Common myeloid progenitor, CD34-positive (primary cell): ENCODE measurements at regions of chr1 and their contacts with region 1.

Region 1: DNA sequence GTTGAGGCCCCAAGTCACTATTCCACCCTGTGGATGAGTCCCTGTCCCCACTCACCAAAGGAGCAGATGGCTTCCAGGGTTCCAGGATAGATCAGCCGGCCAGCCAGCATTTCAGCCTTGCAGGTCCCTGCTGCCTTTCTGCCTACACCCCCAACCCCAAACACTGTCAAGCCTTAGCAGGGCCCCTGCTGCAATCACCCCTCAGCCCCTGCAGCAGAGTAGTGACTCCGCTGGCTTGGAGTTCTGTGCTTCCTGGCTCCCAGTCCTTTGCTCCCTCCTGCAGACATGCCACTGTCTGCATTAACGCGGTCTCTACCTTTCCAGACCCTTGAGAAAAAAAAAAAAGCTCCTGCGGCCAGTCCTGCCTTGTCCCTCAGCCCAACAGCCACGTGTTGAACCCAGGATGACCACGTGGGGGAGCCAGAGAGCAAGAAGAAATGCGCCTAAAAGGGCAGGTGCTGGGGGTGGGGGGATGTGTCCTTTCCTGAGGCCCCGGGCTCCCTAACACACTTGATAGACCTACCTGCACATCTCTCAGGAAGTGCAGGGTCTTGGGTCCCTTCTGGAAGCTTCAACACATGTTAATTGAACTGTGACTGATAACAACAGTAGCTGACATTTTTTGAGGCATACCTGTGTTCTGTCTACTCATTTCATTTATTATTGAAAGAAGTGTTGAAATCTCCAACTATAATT is 37.4 kb downstream of the RASSF5 start:
- DNase-seq: peak; percentile 56 to 68 (median 61)
- H3K4me3 ChIP-seq: no peak overlapping the region
- H3K27ac ChIP-seq: no peak overlapping the region
- H3K4me1 ChIP-seq: peaks cover 0 to 5% (median 2%) of the 10 kb centered on the region in 4 experiments
- H3K27me3 ChIP-seq: no peaks in the 10 kb centered on the region

Region 2: GRCh38 chr1:206489980-206490770 is 54.5 kb before region 1 on chr1:
- CTCF ChIA-PET with region 1: interaction called, 10 read pairs
- POLR2A ChIA-PET with region 1: no interaction called
- DNase-seq: peak; percentile 60 to 78 (median 70)
- H3K4me3 ChIP-seq: no peak overlapping the region
- H3K27ac ChIP-seq: no peak overlapping the region
- H3K4me1 ChIP-seq: peaks cover 0 to 6% (median 3%) of the 10 kb centered on the region in 4 experiments
- H3K27me3 ChIP-seq: no peaks in the 10 kb centered on the region

Region 3: DNA sequence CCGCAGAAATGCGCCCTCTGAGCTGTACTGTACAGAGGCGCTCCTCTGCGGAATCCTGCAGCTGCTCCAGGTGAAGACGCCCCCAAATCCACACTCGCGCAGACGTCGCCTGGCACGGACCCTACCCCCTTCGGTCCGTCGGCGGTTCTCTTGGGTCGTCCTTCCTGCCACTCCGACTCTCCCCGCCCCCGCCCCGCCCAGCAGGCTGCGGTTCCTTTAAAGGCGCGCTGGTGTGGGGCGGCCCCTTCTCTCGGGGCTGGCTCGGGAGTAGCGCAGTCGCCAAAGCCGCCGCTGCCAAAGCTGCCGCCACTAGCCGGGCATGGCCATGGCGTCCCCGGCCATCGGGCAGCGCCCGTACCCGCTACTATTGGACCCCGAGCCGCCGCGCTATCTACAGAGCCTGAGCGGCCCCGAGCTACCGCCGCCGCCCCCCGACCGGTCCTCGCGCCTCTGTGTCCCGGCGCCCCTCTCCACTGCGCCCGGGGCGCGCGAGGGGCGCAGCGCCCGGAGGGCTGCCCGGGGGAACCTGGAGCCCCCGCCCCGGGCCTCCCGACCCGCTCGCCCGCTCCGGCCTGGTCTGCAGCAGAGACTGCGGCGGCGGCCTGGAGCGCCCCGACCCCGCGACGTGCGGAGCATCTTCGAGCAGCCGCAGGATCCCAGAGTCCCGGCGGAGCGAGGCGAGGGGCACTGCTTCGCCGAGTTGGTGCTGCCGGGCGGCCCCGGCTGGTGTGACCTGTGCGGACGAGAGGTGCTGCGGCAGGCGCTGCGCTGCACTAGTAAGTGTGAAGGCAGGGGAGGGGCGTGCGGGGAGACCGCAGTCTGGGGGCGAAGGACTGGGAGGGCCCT is 37.2 kb before region 1 on chr1 and contains the start of gene RASSF5:
- CTCF ChIA-PET with region 1: interaction called, 14 read pairs
- POLR2A ChIA-PET with region 1: no interaction called
- DNase-seq: peak; percentile 40 to 77 (median 68)
- H3K4me3 ChIP-seq: peak within 1 kb of the TSS; percentile 42 to 76 (median 61)
- H3K27ac ChIP-seq: no peak within 1 kb of the TSS
- H3K4me1 ChIP-seq: peaks cover 0 to 38% (median 31%) of the 10 kb centered on the region in 4 experiments
- H3K27me3 ChIP-seq: peaks cover 0 to 51% (median 20%) of the 10 kb centered on the region in 5 experiments

Region 4: GRCh38 chr1:206556750-206557635 is 12.3 kb after region 1 on chr1:
- CTCF ChIA-PET with region 1: interaction called, 158 read pairs
- POLR2A ChIA-PET with region 1: interaction called, 3 read pairs
- DNase-seq: peak; percentile 87 to 95 (median 93)
- H3K4me3 ChIP-seq: peak overlapping the region; percentile 72 to 95 (median 86)
- H3K27ac ChIP-seq: peak overlapping the region; percentile 67 to 86
- H3K4me1 ChIP-seq: peaks cover 28 to 61% (median 59%) of the 10 kb centered on the region in 4 experiments
- H3K27me3 ChIP-seq: no peaks in the 10 kb centered on the region

Region 5: DNA sequence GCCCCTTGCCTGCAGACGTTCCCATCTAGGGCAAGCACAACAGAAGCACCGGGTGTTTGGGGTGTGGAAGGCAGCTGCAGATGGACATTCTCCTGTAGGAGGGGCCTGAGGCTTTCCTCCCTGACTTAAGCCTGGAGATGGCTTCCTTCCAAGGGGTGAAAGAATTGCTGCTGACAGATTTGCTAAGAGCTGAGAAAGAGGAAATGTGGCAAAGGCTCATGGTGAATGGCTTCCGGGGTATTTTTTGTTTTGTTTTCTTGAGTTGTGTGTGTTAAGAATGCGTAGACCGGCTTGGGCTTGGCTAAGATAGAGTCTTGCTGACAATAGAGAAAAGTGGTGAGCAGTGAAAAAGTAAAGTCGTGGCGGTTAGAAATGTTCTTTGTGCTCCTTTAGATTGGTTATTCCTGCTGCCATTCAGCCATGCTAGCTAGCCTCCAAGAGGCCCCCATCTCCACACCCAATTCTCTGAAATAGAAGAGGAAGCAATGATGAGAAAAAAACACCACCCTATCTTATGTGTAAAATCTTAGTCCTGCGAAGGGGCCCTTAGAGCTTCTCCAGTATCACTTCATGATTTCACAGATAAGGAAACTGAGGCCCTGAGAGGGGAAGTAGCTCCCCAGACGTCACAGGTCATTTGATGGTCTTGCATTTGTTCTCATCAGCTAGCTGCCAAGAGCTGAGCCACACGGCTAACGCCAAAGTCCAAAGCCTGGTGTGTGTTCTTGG is 30.6 kb after region 1 on chr1:
- CTCF ChIA-PET with region 1: interaction called, 395 read pairs
- POLR2A ChIA-PET with region 1: no interaction called
- DNase-seq: peak; percentile 84 to 93 (median 92)
- H3K4me3 ChIP-seq: peak overlapping the region in 4 of 7 experiments; percentile 23 to 58 (median 36)
- H3K27ac ChIP-seq: peak overlapping the region; percentile 25 to 88
- H3K4me1 ChIP-seq: peaks cover 25 to 72% (median 49%) of the 10 kb centered on the region in 4 experiments
- H3K27me3 ChIP-seq: no peaks in the 10 kb centered on the region

Region 6: DNA sequence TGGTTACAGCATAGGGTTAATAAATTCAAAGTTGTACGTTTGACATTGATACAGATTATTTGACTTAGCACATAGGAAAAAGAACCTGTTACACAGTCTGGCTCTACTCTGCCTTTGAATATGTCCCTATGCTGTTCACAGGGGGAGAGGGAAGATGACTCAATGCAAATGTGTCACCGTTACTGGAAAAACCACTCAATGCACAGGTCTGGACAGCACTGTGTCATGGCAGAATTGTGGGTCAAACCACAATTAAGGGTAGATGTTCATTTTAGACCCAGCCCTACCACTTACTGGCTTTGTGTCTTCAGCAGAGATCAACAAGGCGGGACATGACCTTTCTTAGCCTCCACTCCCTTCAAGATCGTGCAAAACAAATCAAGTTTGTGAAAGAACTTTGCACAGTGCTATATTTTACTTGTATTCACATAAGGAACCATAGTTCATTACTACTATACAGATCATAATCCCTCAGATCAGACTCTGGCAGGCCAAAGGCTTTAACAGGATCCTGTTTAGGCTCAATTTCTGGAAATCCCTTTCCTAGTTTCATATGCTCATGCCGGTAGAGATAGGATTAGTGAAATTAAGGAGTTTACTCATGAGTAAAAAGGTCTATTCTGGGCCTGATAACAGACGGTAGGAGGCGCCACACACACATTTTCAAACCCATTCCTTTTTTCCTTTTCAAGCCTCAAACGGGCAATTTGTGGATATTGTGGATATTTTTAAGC is 45.5 kb after region 1 on chr1:
- CTCF ChIA-PET with region 1: interaction called, 395 read pairs
- POLR2A ChIA-PET with region 1: interaction called, 5 read pairs
- DNase-seq: peak in 1 of 3 donors; percentile 30
- H3K4me3 ChIP-seq: no peak overlapping the region
- H3K27ac ChIP-seq: peak overlapping the region in 1 of 2 experiments; percentile 1
- H3K4me1 ChIP-seq: no peaks in the 10 kb centered on the region
- H3K27me3 ChIP-seq: no peaks in the 10 kb centered on the region